IMR-90 (cell line): ENCODE measurements at regions of chr3 and their contacts with region 1.

Region 1: GRCh38 chr3:114418724-114419543 is 125.1 kb downstream of the TIGIT start:
- DNase-seq: peak; percentile 95
- ATAC-seq: peak; percentile 93
- H3K4me3 ChIP-seq: no peak overlapping the region
- H3K27ac ChIP-seq: peak overlapping the region; percentile 15; the same call in 1 of the 2 replicates
- H3K4me1 ChIP-seq: peaks cover 4% of the 10 kb centered on the region; the same call in 1 of the 2 replicates
- H3K27me3 ChIP-seq: no peaks in the 10 kb centered on the region
- CTCF ChIP-seq: peak; percentile 77
- POLR2A ChIP-seq: no peak
- RAD21 ChIP-seq: peak; percentile 71

Region 2: GRCh38 chr3:114290911-114291901 is 127.7 kb before region 1 on chr3:
- CTCF ChIA-PET with region 1: no interaction called
- POLR2A ChIA-PET with region 1: no interaction called
- dilution Hi-C with region 1: no loop called
- in situ Hi-C with region 1: no loop called
- intact Hi-C with region 1: loop called (anchors 5 kb)
- DNase-seq: peak; percentile 37
- ATAC-seq: peak; percentile 73
- H3K4me3 ChIP-seq: no peak overlapping the region
- H3K27ac ChIP-seq: no peak overlapping the region
- H3K4me1 ChIP-seq: no peaks in the 10 kb centered on the region
- H3K27me3 ChIP-seq: peaks cover 7% of the 10 kb centered on the region
- CTCF ChIP-seq: peak; percentile 68
- POLR2A ChIP-seq: no peak
- RAD21 ChIP-seq: peak; percentile 69

Region 3: GRCh38 chr3:114405202-114405990 is 13.5 kb before region 1 on chr3:
- CTCF ChIA-PET with region 1: interaction called, 12 read pairs
- POLR2A ChIA-PET with region 1: no interaction called
- dilution Hi-C with region 1: no loop called
- in situ Hi-C with region 1: no loop called
- intact Hi-C with region 1: no loop called
- DNase-seq: no peak
- ATAC-seq: 0 out of 2 replicates have a peak, but pooled peaks have one; percentile 17
- H3K4me3 ChIP-seq: no peak overlapping the region
- H3K27ac ChIP-seq: no peak overlapping the region
- H3K4me1 ChIP-seq: peaks cover 4% of the 10 kb centered on the region
- H3K27me3 ChIP-seq: no peaks in the 10 kb centered on the region
- CTCF ChIP-seq: no peak
- POLR2A ChIP-seq: no peak
- RAD21 ChIP-seq: no peak

Region 4: GRCh38 chr3:114454551-114455251 is 35.8 kb after region 1 on chr3:
- CTCF ChIA-PET with region 1: no interaction called
- POLR2A ChIA-PET with region 1: no interaction called
- dilution Hi-C with region 1: no loop called
- in situ Hi-C with region 1: no loop called
- intact Hi-C with region 1: no loop called
- DNase-seq: no peak
- ATAC-seq: no peak
- H3K4me3 ChIP-seq: peak overlapping the region; percentile 35
- H3K27ac ChIP-seq: no peak overlapping the region
- H3K4me1 ChIP-seq: peaks cover 6% of the 10 kb centered on the region
- H3K27me3 ChIP-seq: no peaks in the 10 kb centered on the region
- CTCF ChIP-seq: no peak
- POLR2A ChIP-seq: no peak
- RAD21 ChIP-seq: no peak